Cardiac septum (tissue), 1 donor: ENCODE measurements at regions of chr6 and their contacts with region 1.

Region 1: GRCh38 chr6:33161354-33162331 is 30.6 kb downstream of the COL11A2 start:
- DNase-seq: peak; percentile 93

Region 2: DNA sequence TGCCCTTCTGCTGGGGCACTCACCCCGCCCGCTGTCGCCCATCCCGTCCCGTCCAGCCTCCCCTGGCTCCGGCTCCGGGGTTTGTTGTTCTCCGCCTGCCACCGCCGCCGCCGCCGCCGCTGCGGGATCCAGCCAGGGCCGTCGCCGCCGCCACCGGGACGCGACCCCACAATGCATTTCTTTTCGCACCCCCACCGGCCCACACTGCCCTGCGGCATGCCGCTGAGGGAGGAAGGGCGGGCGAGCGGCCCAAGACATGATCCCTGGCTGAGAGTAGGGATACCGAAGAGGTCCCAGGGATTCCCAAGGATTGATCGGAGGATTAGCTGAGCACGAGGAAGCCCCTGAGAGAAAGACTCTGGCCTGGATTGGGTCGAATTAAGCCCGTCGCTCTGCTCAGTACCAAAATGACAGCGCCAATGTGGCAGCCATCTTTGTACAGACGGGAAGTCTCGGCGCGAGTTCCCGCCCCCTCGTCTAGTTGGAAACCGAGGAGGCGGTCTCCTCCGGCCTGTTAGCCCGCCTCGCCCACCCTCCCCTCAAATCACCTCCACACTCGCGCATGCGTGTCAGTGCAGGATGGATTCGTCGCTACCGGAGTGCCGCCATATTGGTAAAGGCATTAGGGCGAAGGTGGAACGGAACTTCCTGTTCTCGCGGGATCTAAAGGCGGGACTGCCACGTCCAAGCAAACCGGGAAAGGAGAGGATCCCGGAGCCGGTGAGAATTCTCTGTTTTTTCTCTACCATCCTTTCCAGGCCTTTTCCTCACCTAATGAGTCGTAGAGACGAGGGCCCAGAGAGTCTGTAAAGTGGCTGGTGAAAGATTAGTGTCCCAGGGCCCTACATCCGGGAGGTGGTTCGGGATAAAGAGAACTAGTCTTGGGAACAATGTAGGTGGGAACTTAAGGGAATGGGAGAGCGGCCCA is 38.8 kb after region 1 on chr6 and contains the starts of genes RXRB and SLC39A7:
- intact Hi-C with region 1: loop called (anchors 2 kb)
- DNase-seq: peak; percentile 99
- total RNA-seq, gene RXRB: 33.5 TPM
- total RNA-seq, gene SLC39A7: 62.4 TPM